CD8-positive, alpha-beta T cell (primary cell): ENCODE measurements at regions of chr4 and their contacts with region 1.

Region 1: GRCh38 chr4:40264995-40265909 is 68.4 kb downstream of the RHOH start:
- DNase-seq: peak; percentile 34 to 89 (median 67)
- ATAC-seq: peak; percentile 81
- H3K4me3 ChIP-seq: peak overlapping the region; percentile 7 to 32
- H3K4me3 Mint-ChIP-seq: peak overlapping the region; percentile 74
- H3K27ac ChIP-seq: peak overlapping the region; percentile 41 to 77
- H3K27ac Mint-ChIP-seq: peak overlapping the region; percentile 98
- H3K4me1 ChIP-seq: peaks cover 67% of the 10 kb centered on the region
- H3K4me1 Mint-ChIP-seq: peaks cover 79% of the 10 kb centered on the region
- H3K27me3 ChIP-seq: no peaks in the 10 kb centered on the region
- H3K27me3 Mint-ChIP-seq: no peaks in the 10 kb centered on the region
- CTCF ChIP-seq: no peak

Region 2: GRCh38 chr4:40016007-40016406 is 249.2 kb before region 1 on chr4:
- CTCF ChIA-PET with region 1: no interaction called
- POLR2A ChIA-PET with region 1: no interaction called
- intact Hi-C with region 1: no loop called
- DNase-seq: no peak
- ATAC-seq: no peak
- H3K4me3 ChIP-seq: no peak overlapping the region
- H3K4me3 Mint-ChIP-seq: no peak overlapping the region
- H3K27ac ChIP-seq: no peak overlapping the region
- H3K27ac Mint-ChIP-seq: no peak overlapping the region
- H3K4me1 ChIP-seq: no peaks in the 10 kb centered on the region
- H3K4me1 Mint-ChIP-seq: no peaks in the 10 kb centered on the region
- H3K27me3 ChIP-seq: no peaks in the 10 kb centered on the region
- H3K27me3 Mint-ChIP-seq: no peaks in the 10 kb centered on the region
- CTCF ChIP-seq: no peak

Region 3: GRCh38 chr4:40086421-40086820 is 178.8 kb before region 1 on chr4:
- CTCF ChIA-PET with region 1: no interaction called
- POLR2A ChIA-PET with region 1: no interaction called
- intact Hi-C with region 1: no loop called
- DNase-seq: no peak
- ATAC-seq: no peak
- H3K4me3 ChIP-seq: no peak overlapping the region
- H3K4me3 Mint-ChIP-seq: no peak overlapping the region
- H3K27ac ChIP-seq: no peak overlapping the region
- H3K27ac Mint-ChIP-seq: peak overlapping the region; percentile 45
- H3K4me1 ChIP-seq: no peaks in the 10 kb centered on the region
- H3K4me1 Mint-ChIP-seq: peaks cover 11% of the 10 kb centered on the region
- H3K27me3 ChIP-seq: no peaks in the 10 kb centered on the region
- H3K27me3 Mint-ChIP-seq: no peaks in the 10 kb centered on the region
- CTCF ChIP-seq: no peak

Region 4: GRCh38 chr4:40247350-40247749 is 17.9 kb before region 1 on chr4:
- CTCF ChIA-PET with region 1: interaction called, 5 read pairs
- POLR2A ChIA-PET with region 1: interaction called, 6 read pairs
- intact Hi-C with region 1: loop called in 1 of 2 experiments (anchors 1 kb)
- DNase-seq: peak; percentile 39 to 88 (median 72)
- ATAC-seq: peak; percentile 71
- H3K4me3 ChIP-seq: no peak overlapping the region
- H3K4me3 Mint-ChIP-seq: peak overlapping the region; percentile 36
- H3K27ac ChIP-seq: peak overlapping the region; percentile 52 to 98
- H3K27ac Mint-ChIP-seq: peak overlapping the region; percentile 90
- H3K4me1 ChIP-seq: peaks cover 76% of the 10 kb centered on the region
- H3K4me1 Mint-ChIP-seq: peaks cover 82% of the 10 kb centered on the region
- H3K27me3 ChIP-seq: no peaks in the 10 kb centered on the region
- H3K27me3 Mint-ChIP-seq: no peaks in the 10 kb centered on the region
- CTCF ChIP-seq: no peak